WTC11 (cell line): ENCODE measurements at regions of chr11 and their contacts with region 1.

Region 1: GRCh38 chr11:31870609-31871309 is 59.6 kb upstream of the PAX6 start:
- DNase-seq: peak; percentile 87
- ATAC-seq: peak; percentile 90
- H3K4me3 Mint-ChIP-seq: peak overlapping the region; percentile 47
- H3K27ac Mint-ChIP-seq: no peak overlapping the region
- H3K4me1 Mint-ChIP-seq: peaks cover 30% of the 10 kb centered on the region
- H3K27me3 Mint-ChIP-seq: peaks cover 31% of the 10 kb centered on the region
- CTCF ChIP-seq: 0 out of 2 replicates have a peak, but pooled peaks have one; percentile 39

Region 2: GRCh38 chr11:31641477-31642062 is 229.2 kb before region 1 on chr11:
- CTCF ChIA-PET with region 1: interaction called, 18 read pairs
- POLR2A ChIA-PET with region 1: no interaction called
- DNase-seq: peak; percentile 65
- ATAC-seq: 0 out of 2 replicates have a peak, but pooled peaks have one; percentile 38
- H3K4me3 Mint-ChIP-seq: no peak overlapping the region
- H3K27ac Mint-ChIP-seq: no peak overlapping the region
- H3K4me1 Mint-ChIP-seq: no peaks in the 10 kb centered on the region
- H3K27me3 Mint-ChIP-seq: no peaks in the 10 kb centered on the region
- CTCF ChIP-seq: peak; percentile 59

Region 3: DNA sequence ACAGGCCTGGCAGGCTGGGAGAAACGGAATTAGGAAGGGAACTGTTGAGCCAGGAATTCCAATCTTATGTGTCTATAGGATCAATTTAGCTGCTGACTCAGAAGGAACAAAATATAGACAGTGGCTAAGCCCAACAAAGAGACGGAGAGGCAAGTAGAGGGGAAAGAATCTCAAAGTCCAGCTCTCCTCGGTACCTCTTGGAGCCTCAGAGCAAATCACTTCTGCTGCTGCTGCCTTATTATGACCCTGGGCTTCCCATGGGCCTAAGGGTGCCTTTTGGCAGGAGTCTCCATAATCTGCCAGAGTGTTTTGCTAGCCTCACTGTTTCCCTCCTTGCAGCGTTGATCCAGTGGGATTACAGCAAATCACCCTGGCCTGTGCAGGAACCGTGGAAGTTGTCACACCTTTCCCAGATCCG is 91.4 kb before region 1 on chr11:
- CTCF ChIA-PET with region 1: no interaction called
- POLR2A ChIA-PET with region 1: no interaction called
- DNase-seq: no peak
- ATAC-seq: no peak
- H3K4me3 Mint-ChIP-seq: no peak overlapping the region
- H3K27ac Mint-ChIP-seq: peak overlapping the region; percentile 84
- H3K4me1 Mint-ChIP-seq: peaks cover 5% of the 10 kb centered on the region
- H3K27me3 Mint-ChIP-seq: no peaks in the 10 kb centered on the region
- CTCF ChIP-seq: no peak

Region 4: GRCh38 chr11:31798554-31799434 is 72.0 kb before region 1 on chr11:
- CTCF ChIA-PET with region 1: interaction called, 12 read pairs
- POLR2A ChIA-PET with region 1: no interaction called
- DNase-seq: peak; percentile 86
- ATAC-seq: peak; percentile 79
- H3K4me3 Mint-ChIP-seq: peak overlapping the region; percentile 60
- H3K27ac Mint-ChIP-seq: no peak overlapping the region
- H3K4me1 Mint-ChIP-seq: peaks cover 50% of the 10 kb centered on the region
- H3K27me3 Mint-ChIP-seq: peaks cover 100% of the 10 kb centered on the region
- CTCF ChIP-seq: no peak

Region 5: DNA sequence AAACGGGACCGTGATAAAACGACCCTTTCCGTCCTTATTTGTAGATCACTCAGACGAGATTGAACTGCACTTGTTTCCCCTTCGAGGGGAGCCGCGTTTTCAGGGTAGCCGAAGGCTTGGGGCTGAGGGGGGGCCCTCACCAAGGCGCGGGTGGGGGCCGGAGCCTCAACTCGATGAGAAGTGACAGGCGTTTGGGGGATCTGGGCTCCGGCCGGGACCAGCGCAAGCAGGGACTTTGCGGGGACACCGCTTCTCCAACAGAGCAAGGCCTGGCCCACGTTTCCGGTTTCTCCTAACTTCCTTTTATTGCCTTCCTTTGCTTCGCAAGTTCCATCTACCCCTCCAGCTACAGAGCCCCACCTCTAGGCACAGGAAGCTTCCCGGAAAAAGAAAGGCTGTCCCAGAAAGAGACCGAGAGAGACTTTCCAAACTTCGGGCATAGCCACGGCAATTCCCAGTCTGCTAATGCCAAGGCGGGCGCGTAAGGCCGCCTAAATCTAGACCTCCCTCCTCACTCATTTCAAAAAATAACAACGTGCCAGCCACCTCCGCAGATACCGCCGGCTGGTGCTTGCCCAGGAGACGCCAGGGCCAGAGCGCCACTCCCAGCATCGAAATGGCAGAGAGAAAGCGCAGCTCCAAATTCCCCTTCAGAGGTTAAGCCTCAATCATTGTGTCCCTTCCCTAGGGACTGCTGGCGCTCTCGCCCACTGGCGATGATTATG is 66.3 kb before region 1 on chr11:
- CTCF ChIA-PET with region 1: interaction called, 10 read pairs
- POLR2A ChIA-PET with region 1: no interaction called
- DNase-seq: peak; percentile 39
- ATAC-seq: no peak
- H3K4me3 Mint-ChIP-seq: peak overlapping the region; percentile 69
- H3K27ac Mint-ChIP-seq: no peak overlapping the region
- H3K4me1 Mint-ChIP-seq: peaks cover 78% of the 10 kb centered on the region
- H3K27me3 Mint-ChIP-seq: peaks cover 100% of the 10 kb centered on the region
- CTCF ChIP-seq: no peak

Region 6: DNA sequence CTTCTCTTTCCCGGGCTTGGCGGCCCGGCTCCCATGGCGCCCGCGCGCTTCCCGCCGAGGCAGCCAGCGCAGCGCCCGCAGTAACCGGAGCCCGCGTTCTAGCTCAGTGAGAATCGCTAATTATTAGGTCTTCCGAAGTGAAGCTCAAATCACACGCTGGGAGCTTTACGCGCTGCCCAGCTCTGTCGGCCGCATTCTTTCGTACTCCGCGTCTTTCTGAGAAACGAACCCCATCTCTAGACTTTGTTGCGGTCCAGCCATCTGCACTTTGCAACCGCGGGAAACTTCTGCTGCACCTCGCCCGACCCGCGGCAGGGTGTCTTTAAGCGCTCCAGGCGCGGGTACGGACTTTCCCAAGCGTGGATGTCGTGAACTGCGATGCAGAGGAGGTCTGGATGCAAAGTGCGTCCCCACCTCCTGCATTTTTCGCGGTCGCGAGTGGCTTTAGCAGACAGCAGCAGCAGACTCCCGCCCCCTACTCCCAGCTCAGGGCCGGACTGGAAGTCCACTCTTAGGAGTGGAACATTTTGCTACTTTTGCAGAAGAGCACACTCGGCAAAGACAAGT is 53.6 kb before region 1 on chr11:
- CTCF ChIA-PET with region 1: interaction called, 31 read pairs
- POLR2A ChIA-PET with region 1: no interaction called
- DNase-seq: peak; percentile 19
- ATAC-seq: no peak
- H3K4me3 Mint-ChIP-seq: peak overlapping the region; percentile 62
- H3K27ac Mint-ChIP-seq: no peak overlapping the region
- H3K4me1 Mint-ChIP-seq: peaks cover 64% of the 10 kb centered on the region
- H3K27me3 Mint-ChIP-seq: peaks cover 100% of the 10 kb centered on the region
- CTCF ChIP-seq: no peak

Region 7: GRCh38 chr11:31824879-31825837 is 45.6 kb before region 1 on chr11:
- CTCF ChIA-PET with region 1: interaction called, 31 read pairs
- POLR2A ChIA-PET with region 1: no interaction called
- DNase-seq: no peak
- ATAC-seq: no peak
- H3K4me3 Mint-ChIP-seq: peak overlapping the region; percentile 70
- H3K27ac Mint-ChIP-seq: no peak overlapping the region
- H3K4me1 Mint-ChIP-seq: peaks cover 73% of the 10 kb centered on the region
- H3K27me3 Mint-ChIP-seq: peaks cover 99% of the 10 kb centered on the region
- CTCF ChIP-seq: no peak

Region 8: GRCh38 chr11:31887180-31887579 is 16.4 kb after region 1 on chr11:
- CTCF ChIA-PET with region 1: interaction called, 39 read pairs
- POLR2A ChIA-PET with region 1: interaction called, 4 read pairs
- DNase-seq: peak; percentile 82
- ATAC-seq: peak; percentile 70
- H3K4me3 Mint-ChIP-seq: no peak overlapping the region
- H3K27ac Mint-ChIP-seq: no peak overlapping the region
- H3K4me1 Mint-ChIP-seq: peaks cover 55% of the 10 kb centered on the region
- H3K27me3 Mint-ChIP-seq: peaks cover 11% of the 10 kb centered on the region
- CTCF ChIP-seq: peak; percentile 52